Endothelial cell of umbilical vein (primary cell): ENCODE measurements at regions of chr7 and their contacts with region 1.

Region 1: GRCh38 chr7:130486114-130486958 is 5.5 kb upstream of the MEST start:
- DNase-seq: peak; percentile 30
- H3K4me3 ChIP-seq: peak overlapping the region in 2 of 3 experiments; percentile 24 to 26
- H3K27ac ChIP-seq: no peak overlapping the region
- H3K4me1 ChIP-seq: peaks cover 34% of the 10 kb centered on the region
- H3K27me3 ChIP-seq: peaks cover 2 to 7% of the 10 kb centered on the region in 2 experiments
- CTCF ChIP-seq: peak; percentile 61 to 65
- POLR2A ChIP-seq: no peak

Region 2: GRCh38 chr7:130379921-130380860 is 106.1 kb before region 1 on chr7 and contains the start of gene CPA1:
- CTCF ChIA-PET with region 1: no interaction called
- POLR2A ChIA-PET with region 1: no interaction called
- dilution Hi-C with region 1: no loop called
- intact Hi-C with region 1: no loop called
- DNase-seq: no peak
- H3K4me3 ChIP-seq: no peak within 1 kb of the TSS
- H3K27ac ChIP-seq: no peak within 1 kb of the TSS
- H3K4me1 ChIP-seq: no peaks in the 10 kb centered on the region
- H3K27me3 ChIP-seq: no peaks in the 10 kb centered on the region
- CTCF ChIP-seq: no peak
- POLR2A ChIP-seq: no peak
- total RNA-seq, gene CPA1: not detected in 2 replicates

Region 3: GRCh38 chr7:130430841-130431666 is 55.3 kb before region 1 on chr7:
- CTCF ChIA-PET with region 1: interaction called, 4 read pairs
- POLR2A ChIA-PET with region 1: no interaction called
- dilution Hi-C with region 1: no loop called
- intact Hi-C with region 1: loop called (anchors 2 kb)
- DNase-seq: peak; percentile 77
- H3K4me3 ChIP-seq: peak overlapping the region; percentile 1 to 39 (median 35)
- H3K27ac ChIP-seq: peak overlapping the region; percentile 41
- H3K4me1 ChIP-seq: peaks cover 35% of the 10 kb centered on the region
- H3K27me3 ChIP-seq: no peaks in the 10 kb centered on the region
- CTCF ChIP-seq: no peak
- POLR2A ChIP-seq: no peak

Region 4: GRCh38 chr7:130463553-130464434 is 22.5 kb before region 1 on chr7:
- CTCF ChIA-PET with region 1: no interaction called
- POLR2A ChIA-PET with region 1: no interaction called
- dilution Hi-C with region 1: no loop called
- intact Hi-C with region 1: no loop called
- DNase-seq: peak; percentile 85
- H3K4me3 ChIP-seq: no peak overlapping the region
- H3K27ac ChIP-seq: no peak overlapping the region
- H3K4me1 ChIP-seq: no peaks in the 10 kb centered on the region
- H3K27me3 ChIP-seq: peaks cover 0 to 3% of the 10 kb centered on the region in 2 experiments
- CTCF ChIP-seq: no peak
- POLR2A ChIP-seq: no peak

Region 5: GRCh38 chr7:130668257-130669084 is 182.1 kb after region 1 on chr7 and contains the start of gene COPG2:
- CTCF ChIA-PET with region 1: interaction called, 3 read pairs
- POLR2A ChIA-PET with region 1: no interaction called
- dilution Hi-C with region 1: no loop called
- intact Hi-C with region 1: loop called (anchors 1 kb)
- DNase-seq: peak; percentile 91
- H3K4me3 ChIP-seq: peak within 1 kb of the TSS; percentile 59 to 87 (median 77)
- H3K27ac ChIP-seq: peak within 1 kb of the TSS; percentile 50
- H3K4me1 ChIP-seq: peaks cover 4% of the 10 kb centered on the region
- H3K27me3 ChIP-seq: peaks cover 2 to 10% of the 10 kb centered on the region in 2 experiments
- CTCF ChIP-seq: no peak
- POLR2A ChIP-seq: peak; percentile 76
- total RNA-seq, gene COPG2: 9.4 and 19.0 TPM in 2 replicates

Region 6: GRCh38 chr7:130721486-130722280 is 235.3 kb after region 1 on chr7:
- CTCF ChIA-PET with region 1: interaction called, 5 read pairs
- POLR2A ChIA-PET with region 1: no interaction called
- dilution Hi-C with region 1: no loop called
- intact Hi-C with region 1: loop called (anchors 5 kb)
- DNase-seq: peak; percentile 71
- H3K4me3 ChIP-seq: no peak overlapping the region
- H3K27ac ChIP-seq: no peak overlapping the region
- H3K4me1 ChIP-seq: no peaks in the 10 kb centered on the region
- H3K27me3 ChIP-seq: peaks cover 21 to 28% of the 10 kb centered on the region in 2 experiments
- CTCF ChIP-seq: peak; percentile 55 to 67
- POLR2A ChIP-seq: no peak

Region 7: GRCh38 chr7:131071786-131072504 is 585.6 kb after region 1 on chr7:
- CTCF ChIA-PET with region 1: no interaction called
- POLR2A ChIA-PET with region 1: no interaction called
- dilution Hi-C with region 1: no loop called
- intact Hi-C with region 1: no loop called
- DNase-seq: peak; percentile 96
- H3K4me3 ChIP-seq: peak overlapping the region in 1 of 3 experiments; percentile 51
- H3K27ac ChIP-seq: peak overlapping the region; percentile 88
- H3K4me1 ChIP-seq: peaks cover 17% of the 10 kb centered on the region
- H3K27me3 ChIP-seq: no peaks in the 10 kb centered on the region
- CTCF ChIP-seq: peak; percentile 11 to 16
- POLR2A ChIP-seq: no peak